Activated B cell treated with CpG ODN at 0.5 μM for 24 hours (primary cell): ENCODE measurements at regions of chr17 and their contacts with region 1.

Region 1: GRCh38 chr17:55458977-55459376 is 37.3 kb upstream of the MMD start:
- DNase-seq: peak; percentile 37
- ATAC-seq: peak; percentile 85
- H3K4me3 Mint-ChIP-seq: peak overlapping the region; percentile 16
- H3K27ac Mint-ChIP-seq: peak overlapping the region; percentile 43
- H3K4me1 Mint-ChIP-seq: peaks cover 26% of the 10 kb centered on the region
- H3K27me3 Mint-ChIP-seq: peaks cover 9% of the 10 kb centered on the region
- CTCF ChIP-seq: no peak

Region 2: DNA sequence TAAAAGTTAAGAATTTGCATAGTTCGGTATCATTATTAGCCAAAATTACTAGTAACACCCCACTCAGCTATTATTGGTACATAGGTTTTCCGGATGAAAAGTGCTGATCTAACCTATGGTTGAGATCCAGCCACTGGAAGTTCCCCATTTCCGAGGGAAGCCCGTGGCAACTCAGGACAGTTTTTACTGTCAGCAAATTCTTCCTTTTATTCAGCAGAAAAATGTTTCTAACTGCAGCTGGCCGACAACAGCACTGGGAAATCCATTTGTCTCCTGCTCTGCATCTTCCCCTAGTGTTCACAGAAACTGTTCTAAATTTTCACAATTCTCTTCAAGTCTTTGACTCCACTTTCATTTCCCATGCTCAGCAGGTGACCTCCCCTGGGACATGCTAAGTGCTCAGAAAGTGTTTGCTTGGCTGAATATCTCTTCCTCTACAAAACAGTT is 21.8 kb before region 1 on chr17:
- CTCF ChIA-PET with region 1: no interaction called
- POLR2A ChIA-PET with region 1: interaction called, 3 read pairs
- intact Hi-C with region 1: loop called (anchors 2 kb)
- DNase-seq: peak; percentile 36
- ATAC-seq: peak; percentile 87
- H3K4me3 Mint-ChIP-seq: peak overlapping the region; percentile 57
- H3K27ac Mint-ChIP-seq: peak overlapping the region; percentile 85
- H3K4me1 Mint-ChIP-seq: peaks cover 51% of the 10 kb centered on the region
- H3K27me3 Mint-ChIP-seq: no peaks in the 10 kb centered on the region
- CTCF ChIP-seq: no peak

Region 3: DNA sequence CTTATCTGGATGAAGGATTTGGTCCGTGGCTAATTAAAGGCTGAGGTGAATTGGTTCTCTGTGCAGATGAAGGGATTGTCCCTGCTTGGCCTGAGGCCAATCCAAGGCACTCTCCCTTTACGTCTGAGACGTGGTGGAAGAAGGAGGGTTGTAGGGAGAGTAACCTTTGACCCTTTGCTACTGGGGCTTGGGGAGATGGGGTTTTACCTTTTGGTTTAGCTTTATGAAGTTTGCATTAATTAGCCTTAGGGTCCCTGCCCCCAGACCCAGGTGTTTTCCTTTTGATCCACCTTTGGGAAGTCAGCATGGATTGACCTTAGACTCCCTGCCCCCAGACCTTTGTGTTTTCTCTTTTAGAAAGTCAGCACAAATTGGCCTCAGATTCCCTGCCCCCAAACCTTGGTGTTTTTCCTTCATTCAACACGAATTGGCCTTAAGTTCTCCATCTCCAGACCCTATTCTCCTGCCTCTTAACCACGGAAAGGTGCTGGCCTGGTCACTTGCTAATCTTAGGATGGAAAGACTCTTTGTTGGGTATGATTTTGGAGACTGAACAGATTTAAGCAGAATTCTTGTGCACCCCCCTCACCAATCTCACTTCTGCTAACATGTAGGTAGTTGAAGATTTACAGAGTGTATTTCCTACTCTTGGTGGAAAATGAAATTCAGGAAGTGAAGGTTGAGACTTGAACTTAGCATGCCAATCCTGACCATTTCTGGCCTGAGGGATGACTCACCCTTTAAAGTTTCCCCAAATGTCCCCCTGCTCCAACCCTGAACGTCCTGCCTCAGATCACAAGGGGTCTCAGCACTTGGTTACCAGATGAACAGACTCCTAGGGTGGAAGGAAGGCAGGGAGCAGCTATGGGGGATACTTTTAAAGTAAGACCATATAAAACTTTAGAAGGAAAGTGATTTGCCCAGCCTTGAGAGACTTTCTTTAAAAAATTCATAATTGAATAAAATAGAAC is 14.2 kb before region 1 on chr17:
- CTCF ChIA-PET with region 1: interaction called, 3 read pairs
- POLR2A ChIA-PET with region 1: interaction called, 3 read pairs
- intact Hi-C with region 1: loop called (anchors 1 kb)
- DNase-seq: no peak
- ATAC-seq: peak; percentile 91
- H3K4me3 Mint-ChIP-seq: peak overlapping the region; percentile 61
- H3K27ac Mint-ChIP-seq: peak overlapping the region; percentile 92
- H3K4me1 Mint-ChIP-seq: peaks cover 29% of the 10 kb centered on the region
- H3K27me3 Mint-ChIP-seq: no peaks in the 10 kb centered on the region
- CTCF ChIP-seq: no peak